ENCODE measurements at regions of chr1 and their contacts with region 1.

Region 1: DNA sequence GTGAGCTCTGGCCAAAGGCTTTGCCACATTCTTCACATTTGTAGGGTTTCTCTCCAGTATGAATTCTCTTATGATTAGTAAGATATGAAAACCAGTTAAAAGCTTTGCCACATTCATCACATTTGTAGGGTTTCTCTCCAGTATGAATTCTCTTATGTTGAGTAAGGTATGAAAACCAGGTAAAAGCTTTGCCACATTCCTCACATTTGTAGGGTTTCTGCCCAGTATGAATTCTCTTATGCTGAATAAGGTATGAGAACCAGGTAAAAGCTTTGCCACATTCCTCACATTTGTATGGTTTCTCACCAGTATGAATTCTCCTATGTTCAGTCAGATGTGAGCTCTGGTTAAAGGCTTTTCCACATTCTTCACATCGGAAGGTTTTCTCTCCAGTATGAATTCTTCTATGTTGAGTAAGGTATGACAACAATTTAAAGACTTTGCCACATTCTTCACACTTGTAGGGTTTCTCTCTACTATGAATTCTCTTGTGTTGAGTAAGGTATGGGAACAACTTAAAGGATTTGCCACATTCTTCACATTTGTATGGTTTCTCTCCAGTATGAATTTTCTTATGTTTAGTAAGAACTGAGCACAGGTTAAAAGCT is 20.7 kb downstream of the ZNF695 start:
- DNase-seq: peak; percentile 22
- H3K4me3 Mint-ChIP-seq: no peak overlapping the region
- H3K27ac Mint-ChIP-seq: no peak overlapping the region
- H3K4me1 Mint-ChIP-seq: no peaks in the 10 kb centered on the region
- H3K27me3 Mint-ChIP-seq: no peaks in the 10 kb centered on the region
- CTCF ChIP-seq: no peak

Region 2: GRCh38 chr1:246923482-246923881 is 63.7 kb before region 1 on chr1:
- CTCF ChIA-PET with region 1: no interaction called
- POLR2A ChIA-PET with region 1: no interaction called
- intact Hi-C with region 1: no loop called
- DNase-seq: no peak
- H3K4me3 Mint-ChIP-seq: no peak overlapping the region
- H3K27ac Mint-ChIP-seq: no peak overlapping the region
- H3K4me1 Mint-ChIP-seq: peaks cover 25% of the 10 kb centered on the region
- H3K27me3 Mint-ChIP-seq: no peaks in the 10 kb centered on the region
- CTCF ChIP-seq: no peak

Region 3: GRCh38 chr1:246971090-246971721 is 16.0 kb before region 1 on chr1:
- CTCF ChIA-PET with region 1: interaction called, 10 read pairs
- POLR2A ChIA-PET with region 1: no interaction called
- intact Hi-C with region 1: no loop called
- DNase-seq: peak; percentile 59
- H3K4me3 Mint-ChIP-seq: no peak overlapping the region
- H3K27ac Mint-ChIP-seq: no peak overlapping the region
- H3K4me1 Mint-ChIP-seq: no peaks in the 10 kb centered on the region
- H3K27me3 Mint-ChIP-seq: no peaks in the 10 kb centered on the region
- CTCF ChIP-seq: peak; percentile 49

Region 4: GRCh38 chr1:247046862-247047659 is 59.9 kb after region 1 on chr1:
- CTCF ChIA-PET with region 1: no interaction called
- POLR2A ChIA-PET with region 1: no interaction called
- intact Hi-C with region 1: no loop called
- DNase-seq: no peak
- H3K4me3 Mint-ChIP-seq: no peak overlapping the region
- H3K27ac Mint-ChIP-seq: no peak overlapping the region
- H3K4me1 Mint-ChIP-seq: no peaks in the 10 kb centered on the region
- H3K27me3 Mint-ChIP-seq: no peaks in the 10 kb centered on the region
- CTCF ChIP-seq: no peak

Measured in MCF 10A (cell line).